HEK293 (cell line): ENCODE measurements at regions of chr6 and their contacts with region 1.

Region 1: DNA sequence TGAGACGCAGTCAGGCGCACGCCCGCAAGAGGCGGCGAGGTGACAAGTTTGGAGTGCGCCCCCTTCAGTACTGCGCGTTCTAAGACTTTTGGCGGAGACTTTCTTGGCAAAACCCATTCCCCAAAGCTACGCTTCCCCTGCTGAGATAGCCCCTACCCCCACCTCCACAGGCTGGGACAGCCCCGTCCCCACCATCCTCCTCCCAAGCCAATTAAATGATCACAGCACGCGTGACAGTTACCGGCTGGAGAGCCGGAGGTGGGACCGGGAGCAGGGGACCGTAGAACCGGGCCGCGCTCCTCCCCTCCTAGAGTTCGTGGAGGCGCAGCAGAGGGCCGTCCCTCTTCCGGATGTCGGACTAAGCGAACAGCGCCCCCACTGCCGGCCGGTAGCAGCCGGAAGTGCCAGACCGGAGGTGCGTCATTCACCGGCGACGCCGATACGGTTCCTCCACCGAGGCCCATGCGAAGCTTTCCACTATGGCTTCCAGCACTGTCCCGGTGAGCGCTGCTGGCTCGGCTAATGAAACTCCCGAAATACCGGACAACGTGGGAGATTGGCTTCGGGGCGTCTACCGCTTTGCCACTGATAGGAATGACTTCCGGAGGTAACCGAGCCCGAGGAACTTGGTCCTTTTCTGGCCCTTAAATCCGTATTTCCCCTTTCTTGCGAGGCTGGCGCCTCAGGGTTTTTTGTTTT is at the start of gene TOMM6:
- H3K4me3 ChIP-seq: peak within 1 kb of the TSS; percentile 67
- H3K27ac ChIP-seq: peak within 1 kb of the TSS; percentile 67
- H3K4me1 ChIP-seq: no peaks in the 10 kb centered on the region; the same call in 1 of the 2 replicates
- CTCF ChIP-seq: peak; percentile 98

Region 2: DNA sequence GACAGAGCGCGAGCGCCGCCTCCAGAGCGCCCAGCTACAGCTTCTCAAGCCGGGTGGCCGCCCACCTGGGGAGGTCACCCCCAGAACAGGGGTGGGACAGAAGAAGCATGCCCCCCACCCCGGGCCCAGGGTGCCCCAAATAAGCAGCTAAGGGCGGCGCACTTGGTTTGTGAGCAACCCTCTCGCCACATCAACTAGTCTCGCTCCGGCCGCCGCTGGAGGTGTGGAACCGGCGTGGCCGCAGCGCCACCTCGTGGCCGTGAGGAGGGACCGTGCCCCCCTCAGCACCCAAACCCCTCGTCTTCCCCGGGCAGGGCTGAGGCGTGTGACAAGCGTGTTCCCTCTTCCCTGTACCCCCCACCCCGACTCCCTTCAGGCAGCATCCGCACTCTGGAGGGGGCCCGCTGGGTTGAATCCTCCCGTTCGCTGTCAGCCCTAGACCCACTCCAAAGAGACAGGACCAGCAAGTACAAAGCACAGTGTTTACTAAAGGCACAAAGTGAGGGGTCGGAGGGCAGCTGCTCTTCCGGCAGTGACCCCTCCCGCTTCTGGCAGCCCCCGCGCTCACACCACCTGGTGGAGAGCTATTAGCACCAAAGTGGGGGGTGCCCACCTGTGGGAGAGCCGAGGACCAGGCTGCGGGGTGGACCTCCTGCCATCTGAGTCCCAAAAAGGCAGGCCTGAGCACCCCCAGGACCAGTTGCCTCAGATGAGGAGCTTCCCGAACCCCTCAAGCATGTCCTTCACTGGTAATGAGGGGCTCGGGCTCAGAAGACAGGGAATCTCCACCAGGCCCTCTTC is 103.7 kb before region 1 on chr6:
- CTCF ChIA-PET with region 1: interaction called, 13 read pairs
- POLR2A ChIA-PET with region 1: no interaction called
- H3K4me3 ChIP-seq: no peak overlapping the region
- H3K27ac ChIP-seq: no peak overlapping the region
- H3K4me1 ChIP-seq: no peaks in the 10 kb centered on the region
- CTCF ChIP-seq: peak; percentile 94

Region 3: GRCh38 chr6:41767156-41767833 is 20.1 kb before region 1 on chr6:
- CTCF ChIA-PET with region 1: interaction called, 16 read pairs
- POLR2A ChIA-PET with region 1: interaction called, 5 read pairs
- H3K4me3 ChIP-seq: no peak overlapping the region
- H3K27ac ChIP-seq: peak overlapping the region; percentile 63
- H3K4me1 ChIP-seq: peaks cover 4% of the 10 kb centered on the region; the same call in 1 of the 2 replicates
- CTCF ChIP-seq: no peak

Region 4: GRCh38 chr6:41818271-41819054 is 31.1 kb after region 1 on chr6:
- CTCF ChIA-PET with region 1: interaction called, 12 read pairs
- POLR2A ChIA-PET with region 1: interaction called, 4 read pairs
- H3K4me3 ChIP-seq: no peak overlapping the region
- H3K27ac ChIP-seq: no peak overlapping the region
- H3K4me1 ChIP-seq: peaks cover 2% of the 10 kb centered on the region; the same call in 1 of the 2 replicates
- CTCF ChIP-seq: no peak

Region 5: DNA sequence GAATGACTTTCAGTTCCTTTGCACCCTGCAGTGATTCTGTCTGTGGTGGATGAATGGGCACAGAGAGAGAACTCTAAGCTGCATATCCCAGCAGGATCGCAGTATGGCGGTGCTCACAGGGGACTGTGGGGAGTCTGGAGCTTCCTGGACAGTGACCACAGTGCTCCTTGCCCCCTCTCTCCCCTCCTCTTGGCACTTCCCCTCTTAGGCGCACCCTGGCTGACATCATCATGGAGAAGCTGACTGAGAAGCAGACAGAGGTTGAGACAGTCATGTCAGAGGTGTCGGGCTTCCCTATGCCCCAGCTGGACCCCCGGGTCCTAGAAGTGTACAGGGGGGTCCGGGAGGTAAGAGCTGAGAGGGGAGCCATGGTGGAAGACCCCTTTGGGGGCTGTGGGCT is 142.6 kb after region 1 on chr6:
- CTCF ChIA-PET with region 1: interaction called, 33 read pairs
- POLR2A ChIA-PET with region 1: interaction called, 3 read pairs
- H3K4me3 ChIP-seq: no peak overlapping the region
- H3K27ac ChIP-seq: no peak overlapping the region
- H3K4me1 ChIP-seq: no peaks in the 10 kb centered on the region
- CTCF ChIP-seq: no peak

Region 6: DNA sequence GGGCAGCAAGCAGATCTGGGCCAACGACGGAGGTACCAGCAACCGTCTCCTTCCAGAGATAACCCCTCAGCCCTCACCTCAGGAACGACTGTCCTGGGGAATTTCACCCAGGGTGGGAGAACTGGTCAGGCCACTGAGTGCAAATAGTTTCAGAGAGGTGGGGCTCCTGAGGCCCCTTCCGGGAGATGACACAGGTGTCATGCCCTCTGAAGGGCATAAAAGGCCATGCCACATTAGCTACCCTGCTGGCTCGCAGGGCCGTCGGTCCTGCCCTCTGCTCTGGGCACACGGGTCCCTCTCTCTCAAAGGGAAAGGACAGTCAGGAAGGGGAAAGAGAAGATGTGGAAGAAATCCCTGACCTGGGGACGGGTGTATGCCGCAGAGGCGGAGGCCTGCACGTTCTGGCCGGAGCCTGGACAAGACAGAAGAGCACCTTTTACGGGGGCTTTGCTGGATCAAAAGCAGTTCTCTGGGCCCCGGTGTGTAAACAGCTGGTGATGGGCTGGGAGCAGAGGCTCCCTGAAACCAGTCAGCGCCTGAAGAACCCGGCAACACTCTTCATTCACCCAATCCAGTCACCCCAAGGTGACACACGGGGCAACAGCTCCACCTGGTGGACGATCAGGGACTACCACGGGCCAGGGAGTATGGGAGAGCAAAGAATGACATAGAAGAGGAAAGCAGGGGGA is 256.6 kb after region 1 on chr6:
- CTCF ChIA-PET with region 1: interaction called, 192 read pairs
- POLR2A ChIA-PET with region 1: interaction called, 27 read pairs
- H3K4me3 ChIP-seq: no peak overlapping the region
- H3K27ac ChIP-seq: no peak overlapping the region
- H3K4me1 ChIP-seq: peaks cover 18% of the 10 kb centered on the region
- CTCF ChIP-seq: peak; percentile 93